CD4-positive, alpha-beta memory T cell (primary cell): ENCODE measurements at regions of chr11 and their contacts with region 1.

Region 1: GRCh38 chr11:35404388-35404775 is 15.0 kb downstream of the SLC1A2 start:
- DNase-seq: no peak
- H3K4me3 ChIP-seq: no peak overlapping the region
- H3K4me3 Mint-ChIP-seq: peak overlapping the region in 1 of 8 donors; percentile 17
- H3K27ac ChIP-seq: no peak overlapping the region
- H3K27ac Mint-ChIP-seq: no peak overlapping the region
- H3K4me1 ChIP-seq: no peaks in the 10 kb centered on the region
- H3K4me1 Mint-ChIP-seq: peaks cover 0 to 1% (median under 1%) of the 10 kb centered on the region in 4 donors
- H3K27me3 ChIP-seq: peaks cover 5% of the 10 kb centered on the region
- H3K27me3 Mint-ChIP-seq: peaks cover 4 to 10% of the 10 kb centered on the region in 2 donors

Region 2: DNA sequence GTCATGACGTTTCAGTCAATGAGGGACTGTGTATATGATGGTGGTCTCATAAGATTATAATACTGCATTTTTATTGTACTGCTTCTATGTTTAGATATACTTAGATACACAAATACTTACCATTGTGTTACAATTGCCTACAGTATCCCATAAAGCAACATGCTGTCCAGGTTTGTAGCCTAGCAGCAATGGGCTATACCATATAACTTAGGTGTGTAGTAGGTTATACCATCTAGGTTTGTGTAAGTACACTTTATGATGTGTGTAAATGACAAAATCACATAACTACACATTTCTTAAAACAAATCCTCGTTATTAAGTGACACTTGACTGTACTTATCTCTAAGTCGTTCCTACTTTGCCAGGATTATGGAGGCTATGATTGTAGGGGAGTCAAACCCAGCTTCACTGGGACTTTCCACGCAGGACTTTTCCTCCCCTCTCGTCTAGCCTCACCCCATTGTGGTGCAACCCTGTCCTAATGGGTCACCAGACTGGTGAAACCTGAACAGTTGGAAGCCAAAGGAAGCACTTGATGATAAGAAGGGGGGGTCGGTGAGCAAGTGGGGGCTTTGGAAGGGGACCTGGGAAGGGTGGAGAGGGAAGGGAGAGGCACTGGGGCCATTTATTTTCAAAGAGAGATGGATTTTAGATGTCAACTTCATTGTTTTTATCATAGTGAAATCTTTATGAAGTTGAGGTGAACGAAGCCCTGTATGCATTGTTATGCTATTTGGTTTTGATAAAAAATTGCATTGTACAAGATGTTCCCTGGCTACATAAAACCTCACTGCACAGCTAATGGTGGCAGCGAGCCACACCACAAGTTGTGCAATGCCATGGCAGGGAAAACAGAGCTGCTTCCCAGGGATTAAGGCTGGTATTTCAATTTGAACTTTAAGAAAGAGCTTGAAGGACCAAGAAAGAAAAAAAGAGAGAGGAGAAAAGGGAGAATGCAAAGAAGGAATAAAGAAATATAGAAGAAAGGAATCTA is 654.4 kb before region 1 on chr11:
- CTCF ChIA-PET with region 1: no interaction called
- POLR2A ChIA-PET with region 1: no interaction called
- intact Hi-C with region 1: no loop called
- DNase-seq: no peak
- H3K4me3 ChIP-seq: no peak overlapping the region
- H3K4me3 Mint-ChIP-seq: no peak overlapping the region
- H3K27ac ChIP-seq: no peak overlapping the region
- H3K27ac Mint-ChIP-seq: no peak overlapping the region
- H3K4me1 ChIP-seq: no peaks in the 10 kb centered on the region
- H3K4me1 Mint-ChIP-seq: no peaks in the 10 kb centered on the region
- H3K27me3 ChIP-seq: no peaks in the 10 kb centered on the region
- H3K27me3 Mint-ChIP-seq: peaks cover 8 to 12% of the 10 kb centered on the region in 2 donors

Region 3: DNA sequence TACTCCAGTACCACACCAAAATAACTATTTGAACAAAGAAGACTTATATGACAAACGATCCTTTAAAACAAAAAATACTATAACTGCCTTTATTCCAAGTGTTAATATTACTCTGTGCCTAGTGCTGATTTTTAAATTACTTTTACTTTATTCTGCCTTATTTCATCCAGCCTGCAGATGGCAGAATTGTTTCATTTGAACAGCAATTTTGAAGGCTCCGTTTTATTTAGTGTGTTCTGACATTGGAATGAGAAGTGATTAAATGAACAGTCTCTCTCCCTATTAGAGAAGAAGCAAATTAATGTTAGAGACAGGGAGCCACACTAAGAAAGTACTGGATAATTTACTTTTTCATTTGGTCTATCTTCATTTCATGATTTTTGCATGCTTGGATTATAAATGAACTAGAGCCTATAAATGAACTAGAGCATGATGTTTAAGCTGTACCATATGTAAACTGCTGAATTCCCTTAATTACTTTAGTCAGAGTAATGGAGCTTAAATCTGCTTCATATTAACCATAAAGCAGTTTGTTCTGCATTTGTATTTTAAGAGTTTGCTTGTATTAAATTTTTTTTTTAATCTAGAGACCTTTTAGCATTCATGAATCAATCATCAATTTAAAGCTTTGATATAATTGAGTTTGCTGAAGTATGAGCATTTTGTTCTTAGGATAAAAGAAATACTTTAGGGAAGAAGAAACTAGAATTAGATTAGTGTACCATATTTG is 478.1 kb before region 1 on chr11:
- CTCF ChIA-PET with region 1: interaction called, 13 read pairs
- POLR2A ChIA-PET with region 1: no interaction called
- intact Hi-C with region 1: no loop called
- DNase-seq: peak in 4 of 5 donors; percentile 49 to 57 (median 54)
- H3K4me3 ChIP-seq: no peak overlapping the region
- H3K4me3 Mint-ChIP-seq: no peak overlapping the region
- H3K27ac ChIP-seq: no peak overlapping the region
- H3K27ac Mint-ChIP-seq: peak overlapping the region in 1 of 7 donors; percentile 78
- H3K4me1 ChIP-seq: no peaks in the 10 kb centered on the region
- H3K4me1 Mint-ChIP-seq: peaks cover 8 to 25% (median 15%) of the 10 kb centered on the region in 4 donors
- H3K27me3 ChIP-seq: no peaks in the 10 kb centered on the region
- H3K27me3 Mint-ChIP-seq: no peaks in the 10 kb centered on the region